ENCODE measurements at regions of chr2 and their contacts with region 1.

Region 1: DNA sequence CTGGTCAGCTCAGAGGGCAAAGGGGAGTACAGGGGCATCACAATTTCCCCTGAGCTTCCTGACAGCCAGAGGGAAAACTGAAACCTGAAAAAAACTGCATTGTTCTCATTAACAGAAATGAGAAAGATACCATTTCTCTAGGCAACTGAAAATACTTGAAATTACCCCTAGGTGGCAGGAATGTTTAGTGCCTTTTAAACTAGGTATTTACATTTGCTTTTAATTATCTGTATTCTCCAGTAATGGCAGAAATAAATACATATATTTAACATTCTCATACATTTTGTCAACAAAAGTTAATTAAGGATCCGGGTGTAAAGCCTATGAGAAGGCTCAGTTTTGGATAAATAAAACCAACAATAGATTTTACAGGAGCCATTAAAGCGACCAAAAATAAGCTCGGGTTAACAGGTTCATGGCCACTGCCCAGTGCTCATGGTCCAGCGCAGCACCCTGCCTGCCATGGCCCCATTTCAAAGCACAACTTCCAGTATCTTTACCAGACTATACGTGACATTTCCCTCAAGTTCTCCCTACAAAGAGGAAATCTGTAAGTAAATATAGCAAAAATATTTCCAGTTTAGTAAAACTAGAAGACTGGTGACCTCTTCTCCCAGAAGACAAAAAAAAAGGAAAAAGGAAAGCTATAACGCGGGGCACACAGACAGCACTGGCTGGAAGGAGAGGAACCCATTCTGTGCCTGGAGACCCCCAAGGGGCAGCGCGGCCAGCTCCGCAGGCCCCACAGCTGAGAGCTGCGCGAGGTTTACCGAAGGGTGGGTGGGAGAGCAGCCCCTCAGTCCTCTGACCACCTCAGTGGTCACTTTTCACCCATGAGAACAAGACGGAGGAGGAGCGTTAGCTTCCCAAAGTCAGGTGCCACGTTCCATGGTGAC is 34.7 kb downstream of the RPL31 start:
- DNase-seq: no peak
- ATAC-seq: peak; percentile 43; the same call in 1 of the 2 replicates
- H3K4me3 ChIP-seq: no peak overlapping the region
- H3K27ac ChIP-seq: no peak overlapping the region
- H3K4me1 ChIP-seq: no peaks in the 10 kb centered on the region
- H3K27me3 ChIP-seq: no peaks in the 10 kb centered on the region
- CTCF ChIP-seq: peak; percentile 36 to 63 (median 58); a peak in 5 of 6 replicates
- POLR2A ChIP-seq: no peak
- RAD21 ChIP-seq: peak; percentile 78

Region 2: DNA sequence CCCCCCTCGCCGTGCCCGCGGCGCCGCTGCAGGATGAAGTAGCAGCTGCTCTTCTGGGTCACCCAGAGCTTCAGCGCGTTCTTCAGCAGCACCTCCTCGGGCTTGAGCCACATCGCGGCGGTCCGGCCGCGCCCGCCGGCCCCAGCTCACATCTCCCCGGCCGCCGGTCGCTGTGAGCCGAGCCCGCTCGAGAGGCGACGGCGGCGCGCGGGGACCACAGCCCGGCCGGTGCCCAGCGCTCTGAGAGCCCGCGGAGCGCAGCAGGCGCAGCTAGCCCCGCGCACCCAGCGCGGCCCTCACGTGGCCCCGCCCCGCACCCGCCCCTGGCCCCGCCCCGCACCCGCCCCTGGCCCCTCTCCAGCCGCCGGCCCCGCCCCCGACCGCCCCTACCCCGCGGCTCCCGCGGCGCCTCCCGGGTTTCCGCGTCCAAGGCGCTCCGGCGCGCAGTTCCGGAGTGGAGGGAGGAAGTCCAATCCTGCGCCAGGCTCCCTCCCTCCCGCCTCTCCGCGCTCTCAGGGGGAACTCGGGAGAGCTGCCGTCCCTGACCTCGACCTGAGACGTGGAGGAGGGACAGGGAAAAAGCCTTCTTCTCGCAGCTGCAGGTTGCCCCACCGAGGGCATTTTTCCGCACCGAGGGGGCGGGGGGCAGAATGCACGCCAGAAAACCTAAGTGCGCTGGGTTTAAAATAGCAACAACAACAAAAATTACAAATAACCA is 114.5 kb after region 1 on chr2 and contains the start of gene TBC1D8:
- CTCF ChIA-PET with region 1: interaction called, 33 read pairs
- POLR2A ChIA-PET with region 1: interaction called, 4 read pairs
- RAD21 ChIA-PET with region 1: interaction called in 1 of 2 experiments, 3 read pairs
- intact Hi-C with region 1: loop called (anchors 1 kb)
- DNase-seq: peak; percentile 49
- ATAC-seq: peak; percentile 91
- H3K4me3 ChIP-seq: peak within 1 kb of the TSS; percentile 72 to 80
- H3K27ac ChIP-seq: peak within 1 kb of the TSS; percentile 81; the same call in 1 of the 2 replicates
- H3K4me1 ChIP-seq: peaks cover 23 to 57% of the 10 kb centered on the region in 2 experiments
- H3K27me3 ChIP-seq: no peaks in the 10 kb centered on the region
- CTCF ChIP-seq: no peak
- POLR2A ChIP-seq: peak; percentile 81
- RAD21 ChIP-seq: 0 out of 2 replicates have a peak, but pooled peaks have one; percentile 3
- total RNA-seq, gene TBC1D8: 44.0 TPM

Region 3: DNA sequence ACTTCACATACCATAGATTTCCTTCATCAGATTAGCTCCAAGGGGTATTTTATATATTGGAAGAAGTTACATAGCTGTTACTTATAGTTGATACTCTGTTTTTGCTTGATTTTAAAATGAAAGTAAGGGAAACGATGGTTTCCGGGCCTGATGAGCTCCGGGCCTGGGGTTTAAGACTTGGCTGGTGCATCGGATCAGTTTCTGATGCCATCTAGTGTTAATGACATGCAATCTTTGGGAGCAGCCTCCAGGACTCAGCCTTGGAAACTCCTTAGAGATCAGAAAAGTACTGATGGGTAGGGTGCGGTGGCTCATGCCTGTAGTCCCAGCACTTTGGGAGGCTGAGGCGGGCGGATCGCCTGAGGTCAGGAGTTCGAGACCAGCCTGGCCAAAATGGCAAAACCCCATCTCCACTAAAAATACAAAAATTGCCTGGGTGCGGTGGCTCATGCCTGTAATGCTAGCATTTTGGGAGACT is 168.8 kb after region 1 on chr2:
- CTCF ChIA-PET with region 1: interaction called, 31 read pairs
- POLR2A ChIA-PET with region 1: interaction called, 3 read pairs
- RAD21 ChIA-PET with region 1: interaction called in 1 of 2 experiments, 5 read pairs
- intact Hi-C with region 1: loop called (anchors 5 kb)
- DNase-seq: peak; percentile 91
- ATAC-seq: peak; percentile 97
- H3K4me3 ChIP-seq: peak overlapping the region; percentile 8 to 29
- H3K27ac ChIP-seq: peak overlapping the region; percentile 27; the same call in 1 of the 2 replicates
- H3K4me1 ChIP-seq: peaks cover 3 to 7% of the 10 kb centered on the region in 2 experiments; a peak in 2 of 4 replicates
- H3K27me3 ChIP-seq: no peaks in the 10 kb centered on the region
- CTCF ChIP-seq: peak; percentile 46 to 79 (median 64)
- POLR2A ChIP-seq: no peak
- RAD21 ChIP-seq: peak; percentile 87

Region 4: GRCh38 chr2:101725515-101726192 is 688.8 kb after region 1 on chr2:
- CTCF ChIA-PET with region 1: no interaction called
- POLR2A ChIA-PET with region 1: no interaction called
- RAD21 ChIA-PET with region 1: no interaction called
- intact Hi-C with region 1: no loop called
- DNase-seq: no peak
- ATAC-seq: no peak
- H3K4me3 ChIP-seq: no peak overlapping the region
- H3K27ac ChIP-seq: no peak overlapping the region
- H3K4me1 ChIP-seq: peaks cover 2 to 13% of the 10 kb centered on the region in 2 experiments; a peak in 3 of 4 replicates
- H3K27me3 ChIP-seq: no peaks in the 10 kb centered on the region
- CTCF ChIP-seq: peak in 2 of 3 experiments; percentile 24 to 26; a peak in 2 of 6 replicates
- POLR2A ChIP-seq: no peak
- RAD21 ChIP-seq: peak; percentile 20; the same call in 1 of the 2 replicates